Ovary (tissue), 10 donors: ENCODE measurements at regions of chr15 and their contacts with region 1.

Region 1: GRCh38 chr15:42184736-42185135 is 23.4 kb downstream of the VPS39 start:
- DNase-seq: no peak
- H3K4me3 ChIP-seq: no peak overlapping the region
- H3K27ac ChIP-seq: no peak overlapping the region
- H3K4me1 ChIP-seq: no peaks in the 10 kb centered on the region
- H3K27me3 ChIP-seq: no peaks in the 10 kb centered on the region
- CTCF ChIP-seq: no peak
- EP300 ChIP-seq: no peak
- POLR2A ChIP-seq: no peak

Region 2: GRCh38 chr15:42253300-42253699 is 68.6 kb after region 1 on chr15:
- intact Hi-C with region 1: no loop called
- DNase-seq: no peak
- H3K4me3 ChIP-seq: no peak overlapping the region
- H3K27ac ChIP-seq: no peak overlapping the region
- H3K4me1 ChIP-seq: no peaks in the 10 kb centered on the region
- H3K27me3 ChIP-seq: no peaks in the 10 kb centered on the region
- CTCF ChIP-seq: no peak
- EP300 ChIP-seq: no peak
- POLR2A ChIP-seq: no peak

Region 3: GRCh38 chr15:43958861-43959330 is 1774.2 kb after region 1 on chr15:
- intact Hi-C with region 1: loop called in 1 of 4 experiments (anchors 5 kb)
- DNase-seq: no peak
- H3K4me3 ChIP-seq: no peak overlapping the region
- H3K27ac ChIP-seq: no peak overlapping the region
- H3K4me1 ChIP-seq: no peaks in the 10 kb centered on the region
- H3K27me3 ChIP-seq: no peaks in the 10 kb centered on the region
- CTCF ChIP-seq: no peak
- EP300 ChIP-seq: no peak
- POLR2A ChIP-seq: no peak